ENCODE measurements at regions of chr1 and their contacts with region 1.

Region 1: GRCh38 chr1:205631727-205632373 is at the start of gene ELK4:
- DNase-seq: peak; percentile 98 to 100 (median 99)
- ATAC-seq: peak; percentile 92
- H3K4me3 ChIP-seq: peak within 1 kb of the TSS; percentile 84
- H3K4me3 Mint-ChIP-seq: peak within 1 kb of the TSS; percentile 85 to 100 (median 94)
- H3K27ac ChIP-seq: peak within 1 kb of the TSS; percentile 95
- H3K27ac Mint-ChIP-seq: peak within 1 kb of the TSS; percentile 89 to 99 (median 97)
- H3K4me1 ChIP-seq: peaks cover 20 to 33% of the 10 kb centered on the region in 2 donors
- H3K4me1 Mint-ChIP-seq: peaks cover 23 to 51% (median 37%) of the 10 kb centered on the region in 7 donors
- H3K27me3 ChIP-seq: no peaks in the 10 kb centered on the region
- H3K27me3 Mint-ChIP-seq: peaks cover 0 to 7% (median 0%) of the 10 kb centered on the region in 5 donors
- total RNA-seq, gene ELK4: 104 to 250 (median 156) TPM

Region 2: DNA sequence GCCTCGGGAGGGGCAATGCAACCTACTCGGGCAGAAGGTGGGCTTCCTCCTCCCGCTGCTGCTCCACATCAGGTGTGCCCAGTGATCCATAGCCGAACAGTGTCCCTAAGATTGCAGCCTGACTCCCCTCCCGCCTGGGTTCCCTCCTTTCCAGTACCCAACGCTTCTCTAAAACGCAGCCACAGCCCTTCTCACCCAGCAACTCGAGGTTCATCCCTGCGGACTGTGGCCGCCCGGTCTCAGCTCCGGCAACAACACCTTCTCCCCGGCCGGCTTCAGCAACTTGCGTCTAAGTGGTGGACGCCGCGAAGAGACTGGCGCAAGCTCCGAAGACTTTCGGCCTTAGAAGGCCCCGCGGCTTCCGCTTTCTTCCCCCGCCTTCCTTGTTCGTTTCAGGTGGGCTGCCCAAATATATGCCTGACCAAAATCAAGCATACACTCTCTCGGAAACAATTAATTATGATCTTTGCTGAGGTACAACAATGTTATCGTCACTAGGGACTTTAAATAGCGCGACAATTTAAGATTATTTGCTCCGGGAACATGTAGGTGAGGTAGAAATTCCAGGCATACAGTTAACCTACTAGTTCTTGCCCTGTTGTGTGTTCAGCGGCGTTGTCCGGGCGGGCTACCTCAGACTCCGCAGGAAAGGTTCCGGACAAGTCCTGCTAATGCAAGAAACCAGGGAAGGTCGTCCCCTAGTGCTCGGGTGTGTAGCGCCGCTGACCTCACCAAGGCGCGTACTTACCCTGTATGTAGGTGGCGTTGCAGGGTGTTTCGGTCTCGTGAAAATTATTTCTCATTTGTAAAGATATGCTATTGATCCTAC is 510.0 kb before region 1 on chr1 and contains the start of gene RBBP5:
- CTCF ChIA-PET with region 1: interaction called, 3 read pairs
- POLR2A ChIA-PET with region 1: interaction called, 4 read pairs
- intact Hi-C with region 1: loop called (anchors 1 kb)
- DNase-seq: peak; percentile 87 to 97 (median 93)
- ATAC-seq: peak; percentile 98
- H3K4me3 ChIP-seq: peak within 1 kb of the TSS; percentile 89
- H3K4me3 Mint-ChIP-seq: peak within 1 kb of the TSS; percentile 89 to 99 (median 96)
- H3K27ac ChIP-seq: peak within 1 kb of the TSS; percentile 86
- H3K27ac Mint-ChIP-seq: peak within 1 kb of the TSS; percentile 98 to 100 (median 99)
- H3K4me1 ChIP-seq: peaks cover 18 to 24% of the 10 kb centered on the region in 2 donors
- H3K4me1 Mint-ChIP-seq: peaks cover 30 to 56% (median 51%) of the 10 kb centered on the region in 7 donors
- H3K27me3 ChIP-seq: no peaks in the 10 kb centered on the region
- H3K27me3 Mint-ChIP-seq: no peaks in the 10 kb centered on the region
- total RNA-seq, gene RBBP5: 11.0 to 31.5 (median 21.0) TPM

Region 3: GRCh38 chr1:205335643-205336091 is 296.2 kb before region 1 on chr1:
- CTCF ChIA-PET with region 1: no interaction called
- POLR2A ChIA-PET with region 1: no interaction called
- intact Hi-C with region 1: loop called in 1 of 2 experiments (anchors 10 kb)
- DNase-seq: peak; percentile 55 to 81 (median 71)
- ATAC-seq: peak; percentile 96
- H3K4me3 ChIP-seq: no peak overlapping the region
- H3K4me3 Mint-ChIP-seq: no peak overlapping the region
- H3K27ac ChIP-seq: no peak overlapping the region
- H3K27ac Mint-ChIP-seq: no peak overlapping the region
- H3K4me1 ChIP-seq: no peaks in the 10 kb centered on the region
- H3K4me1 Mint-ChIP-seq: peaks cover 0 to 5% (median 0%) of the 10 kb centered on the region in 7 donors
- H3K27me3 ChIP-seq: no peaks in the 10 kb centered on the region
- H3K27me3 Mint-ChIP-seq: peaks cover 0 to 40% (median 0%) of the 10 kb centered on the region in 5 donors

Region 4: DNA sequence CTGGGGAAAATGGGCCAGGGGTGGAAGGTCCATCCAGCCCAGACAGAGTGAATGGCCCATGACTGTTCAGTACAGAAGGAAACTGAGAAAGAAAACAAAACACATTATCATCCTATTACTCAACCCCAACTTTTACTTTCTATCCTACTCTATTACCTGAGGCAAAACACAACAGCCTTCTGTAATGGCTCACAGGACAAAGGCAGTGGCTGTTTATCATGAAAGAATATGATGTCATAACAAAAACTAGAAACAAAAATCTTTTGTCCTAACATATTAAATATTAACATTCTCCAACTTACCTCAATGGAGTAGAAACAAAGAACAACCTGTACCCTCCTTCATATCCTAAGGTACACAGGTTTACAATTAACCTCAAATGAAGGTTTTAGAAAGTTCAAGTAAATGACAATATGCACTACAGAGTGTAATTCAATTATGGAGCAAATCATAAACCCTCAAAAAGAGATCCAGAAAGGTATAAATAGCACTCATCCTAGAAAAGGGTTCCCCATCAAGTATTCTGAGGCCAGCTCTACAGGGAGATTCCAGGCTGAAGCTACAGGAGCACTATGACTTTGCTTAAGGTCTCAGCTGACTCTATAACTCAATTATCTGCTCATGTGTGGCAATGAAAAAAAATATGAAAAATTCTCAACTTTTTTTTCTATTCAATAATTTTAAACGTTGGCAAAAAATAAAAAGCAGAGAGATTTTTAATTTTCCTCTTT is 15.1 kb before region 1 on chr1:
- CTCF ChIA-PET with region 1: interaction called, 5 read pairs
- POLR2A ChIA-PET with region 1: interaction called, 11 read pairs
- intact Hi-C with region 1: loop called in 1 of 2 experiments (anchors 1 kb)
- DNase-seq: no peak
- ATAC-seq: no peak
- H3K4me3 ChIP-seq: no peak overlapping the region
- H3K4me3 Mint-ChIP-seq: no peak overlapping the region
- H3K27ac ChIP-seq: no peak overlapping the region
- H3K27ac Mint-ChIP-seq: peak overlapping the region in 5 of 9 donors; percentile 8 to 59 (median 46)
- H3K4me1 ChIP-seq: peaks cover under 1 to 11% of the 10 kb centered on the region in 2 donors
- H3K4me1 Mint-ChIP-seq: peaks cover 12 to 66% (median 54%) of the 10 kb centered on the region in 7 donors
- H3K27me3 ChIP-seq: no peaks in the 10 kb centered on the region
- H3K27me3 Mint-ChIP-seq: no peaks in the 10 kb centered on the region

Region 5: DNA sequence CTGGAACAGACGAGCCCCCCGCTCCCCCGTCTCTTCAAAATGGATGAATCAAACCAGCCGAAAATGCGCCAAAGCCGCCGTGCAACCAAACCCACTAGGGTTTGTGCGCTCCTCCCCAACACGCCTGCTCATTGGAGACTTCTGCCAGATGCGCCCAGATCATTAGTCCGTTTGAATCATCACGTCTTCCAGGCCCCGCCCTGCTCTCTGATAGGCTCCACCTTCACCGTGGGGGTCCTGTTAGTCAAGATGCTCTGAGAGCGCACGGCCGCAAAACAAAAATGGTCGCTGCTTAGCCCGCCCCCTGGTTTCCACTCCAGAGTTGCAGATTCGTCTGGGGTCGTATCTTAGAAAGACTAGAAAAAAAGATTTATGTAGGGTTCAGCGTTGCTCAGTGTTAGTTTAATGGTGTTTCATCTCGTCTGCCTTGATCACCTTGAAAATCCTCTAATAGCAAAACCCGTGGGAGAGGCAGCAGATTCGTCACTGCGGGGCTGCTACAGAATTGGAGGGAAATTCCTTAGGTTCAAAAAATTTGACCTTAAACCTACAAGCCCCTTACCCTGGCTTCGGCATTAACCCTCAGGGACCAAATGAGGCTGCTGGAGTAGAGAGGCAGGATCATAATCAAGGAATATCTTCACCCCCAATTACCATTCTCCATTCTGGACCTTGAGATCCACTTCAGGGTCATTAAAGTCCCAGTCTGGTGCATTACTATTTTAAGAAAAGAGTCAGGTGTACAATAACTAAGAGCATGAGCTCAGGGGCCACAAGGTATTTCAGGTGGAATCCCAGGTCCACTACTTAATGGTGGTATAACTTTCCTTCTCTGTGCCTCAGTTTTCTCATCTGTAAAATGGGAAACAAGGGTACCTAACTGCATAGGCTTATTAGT is 118.5 kb after region 1 on chr1 and contains the start of gene NUCKS1:
- CTCF ChIA-PET with region 1: no interaction called
- POLR2A ChIA-PET with region 1: interaction called, 7 read pairs
- intact Hi-C with region 1: loop called (anchors 1 kb)
- DNase-seq: peak; percentile 79 to 99 (median 97)
- ATAC-seq: peak; percentile 86
- H3K4me3 ChIP-seq: peak within 1 kb of the TSS; percentile 81
- H3K4me3 Mint-ChIP-seq: peak within 1 kb of the TSS; percentile 83 to 99 (median 96)
- H3K27ac ChIP-seq: peak within 1 kb of the TSS; percentile 95
- H3K27ac Mint-ChIP-seq: peak within 1 kb of the TSS; percentile 96 to 100 (median 98)
- H3K4me1 ChIP-seq: peaks cover 6 to 10% of the 10 kb centered on the region in 2 donors
- H3K4me1 Mint-ChIP-seq: peaks cover 24 to 49% (median 39%) of the 10 kb centered on the region in 7 donors
- H3K27me3 ChIP-seq: no peaks in the 10 kb centered on the region
- H3K27me3 Mint-ChIP-seq: peaks cover 0 to 3% (median 0%) of the 10 kb centered on the region in 5 donors
- total RNA-seq, gene NUCKS1: 70.4 to 164 (median 122) TPM

Region 6: DNA sequence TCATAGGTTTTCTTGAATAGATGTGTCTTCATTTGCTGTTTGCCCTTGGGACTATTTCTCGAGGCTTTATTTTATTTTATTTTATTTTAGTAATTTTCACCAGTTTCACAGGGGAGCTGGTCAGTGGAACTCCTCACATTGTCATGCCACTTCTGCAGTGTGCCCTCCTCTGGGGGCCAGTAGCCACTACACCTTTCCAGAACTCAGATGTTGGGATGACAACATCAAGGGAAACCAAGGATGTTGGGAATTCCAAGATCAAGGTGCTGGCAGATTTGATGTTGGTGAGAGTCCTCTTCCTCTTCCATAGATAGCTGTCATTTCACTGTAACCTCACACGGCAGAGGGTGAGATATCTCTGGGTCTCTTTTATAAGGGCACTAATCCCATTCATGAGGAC is 275.9 kb after region 1 on chr1:
- CTCF ChIA-PET with region 1: no interaction called
- POLR2A ChIA-PET with region 1: no interaction called
- intact Hi-C with region 1: no loop called
- DNase-seq: no peak
- ATAC-seq: no peak
- H3K4me3 ChIP-seq: no peak overlapping the region
- H3K4me3 Mint-ChIP-seq: no peak overlapping the region
- H3K27ac ChIP-seq: no peak overlapping the region
- H3K27ac Mint-ChIP-seq: no peak overlapping the region
- H3K4me1 ChIP-seq: no peaks in the 10 kb centered on the region
- H3K4me1 Mint-ChIP-seq: no peaks in the 10 kb centered on the region
- H3K27me3 ChIP-seq: no peaks in the 10 kb centered on the region
- H3K27me3 Mint-ChIP-seq: peaks cover 0 to 38% (median 5%) of the 10 kb centered on the region in 5 donors

Region 7: GRCh38 chr1:206925106-206925736 is 1293.4 kb after region 1 on chr1:
- CTCF ChIA-PET with region 1: no interaction called
- POLR2A ChIA-PET with region 1: no interaction called
- intact Hi-C with region 1: loop called in 1 of 2 experiments (anchors 5 kb)
- DNase-seq: peak in 3 of 9 donors; percentile 25 to 38 (median 37)
- ATAC-seq: peak; percentile 62
- H3K4me3 ChIP-seq: no peak overlapping the region
- H3K4me3 Mint-ChIP-seq: no peak overlapping the region
- H3K27ac ChIP-seq: peak overlapping the region; percentile 90
- H3K27ac Mint-ChIP-seq: no peak overlapping the region
- H3K4me1 ChIP-seq: peaks cover 46 to 51% of the 10 kb centered on the region in 2 donors
- H3K4me1 Mint-ChIP-seq: peaks cover 19 to 37% (median 31%) of the 10 kb centered on the region in 7 donors
- H3K27me3 ChIP-seq: no peaks in the 10 kb centered on the region
- H3K27me3 Mint-ChIP-seq: no peaks in the 10 kb centered on the region

Measured in naive thymus-derived CD4-positive, alpha-beta T cell (primary cell).